CD8-positive, alpha-beta T cell (primary cell): ENCODE measurements at regions of chr2 and their contacts with region 1.

Region 1: GRCh38 chr2:55050133-55050994 is at the start of gene RTN4:
- DNase-seq: peak; percentile 95 to 99 (median 98)
- ATAC-seq: peak; percentile 88
- H3K4me3 ChIP-seq: peak within 1 kb of the TSS; percentile 79 to 87
- H3K4me3 Mint-ChIP-seq: peak within 1 kb of the TSS; percentile 100
- H3K27ac ChIP-seq: peak within 1 kb of the TSS; percentile 83 to 90
- H3K27ac Mint-ChIP-seq: peak within 1 kb of the TSS; percentile 100
- H3K4me1 ChIP-seq: peaks cover 60% of the 10 kb centered on the region
- H3K4me1 Mint-ChIP-seq: peaks cover 72% of the 10 kb centered on the region
- H3K27me3 ChIP-seq: no peaks in the 10 kb centered on the region
- H3K27me3 Mint-ChIP-seq: no peaks in the 10 kb centered on the region
- CTCF ChIP-seq: no peak
- total RNA-seq, gene RTN4: 79.7 to 81.7 TPM

Region 2: DNA sequence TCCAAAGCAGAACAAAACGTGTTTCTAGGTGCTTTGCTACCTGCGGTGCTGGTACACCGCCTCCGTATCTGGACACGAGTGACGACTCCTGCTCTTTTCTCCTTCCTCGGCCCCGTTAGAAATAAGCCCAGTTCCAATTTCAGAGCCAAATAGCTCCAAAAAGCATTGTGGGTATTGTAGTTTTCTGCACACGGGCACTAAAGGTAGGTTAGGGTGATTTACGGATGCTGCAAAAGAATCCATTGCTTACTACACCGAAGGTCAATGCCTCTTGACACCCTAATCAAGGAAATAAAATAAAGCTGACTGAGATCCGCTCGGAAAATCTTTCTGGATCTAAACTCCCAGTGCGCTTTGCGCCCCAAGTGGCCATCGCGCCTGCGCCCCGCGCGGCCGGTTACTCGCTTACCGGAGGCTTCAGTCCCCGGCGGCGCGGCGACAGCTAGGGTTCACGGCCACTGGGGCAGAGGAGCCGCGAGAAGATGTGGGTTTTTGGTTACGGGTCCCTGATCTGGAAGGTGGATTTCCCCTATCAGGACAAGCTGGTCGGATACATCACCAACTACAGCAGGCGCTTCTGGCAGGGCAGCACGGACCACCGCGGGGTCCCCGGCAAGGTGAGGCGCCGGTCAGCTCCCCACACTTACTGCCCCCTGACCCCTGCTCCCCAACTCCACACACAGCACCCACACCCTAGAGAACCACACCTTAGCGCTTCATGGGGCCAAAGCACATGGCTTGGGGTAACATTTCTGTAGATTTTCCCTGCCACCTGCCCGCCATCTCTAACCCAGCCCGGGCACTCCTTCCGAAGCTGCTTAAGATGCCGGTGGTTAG is 1282.7 kb before region 1 on chr2 and contains the start of gene CHAC2:
- CTCF ChIA-PET with region 1: no interaction called
- POLR2A ChIA-PET with region 1: no interaction called
- intact Hi-C with region 1: loop called in 1 of 2 experiments (anchors 10 kb)
- DNase-seq: peak; percentile 50 to 92 (median 84)
- ATAC-seq: peak; percentile 87
- H3K4me3 ChIP-seq: peak within 1 kb of the TSS; percentile 71 to 96
- H3K4me3 Mint-ChIP-seq: peak within 1 kb of the TSS; percentile 92
- H3K27ac ChIP-seq: peak within 1 kb of the TSS; percentile 70 to 86
- H3K27ac Mint-ChIP-seq: peak within 1 kb of the TSS; percentile 93
- H3K4me1 ChIP-seq: peaks cover 9% of the 10 kb centered on the region
- H3K4me1 Mint-ChIP-seq: peaks cover 29% of the 10 kb centered on the region
- H3K27me3 ChIP-seq: no peaks in the 10 kb centered on the region
- H3K27me3 Mint-ChIP-seq: no peaks in the 10 kb centered on the region
- CTCF ChIP-seq: peak; percentile 31
- total RNA-seq, gene CHAC2: 0.87 to 1.0 TPM

Region 3: GRCh38 chr2:54570925-54571694 is 479.3 kb before region 1 on chr2:
- CTCF ChIA-PET with region 1: no interaction called
- POLR2A ChIA-PET with region 1: no interaction called
- intact Hi-C with region 1: loop called (anchors 5 kb)
- DNase-seq: peak; percentile 23 to 87 (median 69)
- ATAC-seq: peak; percentile 8
- H3K4me3 ChIP-seq: peak overlapping the region; percentile 13 to 21
- H3K4me3 Mint-ChIP-seq: peak overlapping the region; percentile 81
- H3K27ac ChIP-seq: peak overlapping the region; percentile 87 to 94
- H3K27ac Mint-ChIP-seq: peak overlapping the region; percentile 100
- H3K4me1 ChIP-seq: peaks cover 94% of the 10 kb centered on the region
- H3K4me1 Mint-ChIP-seq: peaks cover 95% of the 10 kb centered on the region
- H3K27me3 ChIP-seq: no peaks in the 10 kb centered on the region
- H3K27me3 Mint-ChIP-seq: no peaks in the 10 kb centered on the region
- CTCF ChIP-seq: no peak

Region 4: GRCh38 chr2:55014962-55015939 is 35.1 kb before region 1 on chr2:
- CTCF ChIA-PET with region 1: interaction called, 18 read pairs
- POLR2A ChIA-PET with region 1: interaction called, 15 read pairs
- intact Hi-C with region 1: loop called (anchors 1 to 2 kb)
- DNase-seq: peak in 7 of 9 experiments; percentile 22 to 73 (median 41)
- ATAC-seq: peak; percentile 39
- H3K4me3 ChIP-seq: no peak overlapping the region
- H3K4me3 Mint-ChIP-seq: no peak overlapping the region
- H3K27ac ChIP-seq: no peak overlapping the region
- H3K27ac Mint-ChIP-seq: no peak overlapping the region
- H3K4me1 ChIP-seq: peaks cover 28% of the 10 kb centered on the region
- H3K4me1 Mint-ChIP-seq: peaks cover 54% of the 10 kb centered on the region
- H3K27me3 ChIP-seq: no peaks in the 10 kb centered on the region
- H3K27me3 Mint-ChIP-seq: no peaks in the 10 kb centered on the region
- CTCF ChIP-seq: peak; percentile 59

Region 5: GRCh38 chr2:55080204-55080738 is 29.9 kb after region 1 on chr2:
- CTCF ChIA-PET with region 1: no interaction called
- POLR2A ChIA-PET with region 1: no interaction called
- intact Hi-C with region 1: no loop called
- DNase-seq: no peak
- ATAC-seq: no peak
- H3K4me3 ChIP-seq: no peak overlapping the region
- H3K4me3 Mint-ChIP-seq: no peak overlapping the region
- H3K27ac ChIP-seq: no peak overlapping the region
- H3K27ac Mint-ChIP-seq: no peak overlapping the region
- H3K4me1 ChIP-seq: no peaks in the 10 kb centered on the region
- H3K4me1 Mint-ChIP-seq: no peaks in the 10 kb centered on the region
- H3K27me3 ChIP-seq: no peaks in the 10 kb centered on the region
- H3K27me3 Mint-ChIP-seq: peaks cover 3% of the 10 kb centered on the region
- CTCF ChIP-seq: no peak

Region 6: GRCh38 chr2:55133467-55134315 is 83.3 kb after region 1 on chr2:
- CTCF ChIA-PET with region 1: no interaction called
- POLR2A ChIA-PET with region 1: interaction called, 8 read pairs
- intact Hi-C with region 1: loop called (anchors 1 to 5 kb)
- DNase-seq: peak; percentile 4 to 92 (median 35)
- ATAC-seq: peak; percentile 92
- H3K4me3 ChIP-seq: peak overlapping the region; percentile 49 to 51
- H3K4me3 Mint-ChIP-seq: peak overlapping the region; percentile 89
- H3K27ac ChIP-seq: peak overlapping the region; percentile 60 to 93
- H3K27ac Mint-ChIP-seq: peak overlapping the region; percentile 97
- H3K4me1 ChIP-seq: peaks cover 27% of the 10 kb centered on the region
- H3K4me1 Mint-ChIP-seq: peaks cover 43% of the 10 kb centered on the region
- H3K27me3 ChIP-seq: no peaks in the 10 kb centered on the region
- H3K27me3 Mint-ChIP-seq: no peaks in the 10 kb centered on the region
- CTCF ChIP-seq: no peak

Region 7: GRCh38 chr2:55232084-55232862 is 181.9 kb after region 1 on chr2 and contains the starts of genes CLHC1 and RPS27A:
- CTCF ChIA-PET with region 1: no interaction called
- POLR2A ChIA-PET with region 1: interaction called, 9 read pairs
- intact Hi-C with region 1: loop called (anchors 1 to 5 kb)
- DNase-seq: peak; percentile 89 to 97 (median 94)
- ATAC-seq: peak; percentile 87
- H3K4me3 ChIP-seq: peak within 1 kb of the TSS; percentile 97 to 99
- H3K4me3 Mint-ChIP-seq: peak within 1 kb of the TSS; percentile 93
- H3K27ac ChIP-seq: peak within 1 kb of the TSS; percentile 92 to 99
- H3K27ac Mint-ChIP-seq: peak within 1 kb of the TSS; percentile 97
- H3K4me1 ChIP-seq: peaks cover 35% of the 10 kb centered on the region
- H3K4me1 Mint-ChIP-seq: peaks cover 68% of the 10 kb centered on the region
- H3K27me3 ChIP-seq: no peaks in the 10 kb centered on the region
- H3K27me3 Mint-ChIP-seq: no peaks in the 10 kb centered on the region
- CTCF ChIP-seq: no peak
- total RNA-seq, gene CLHC1: 2.2 to 2.3 TPM
- total RNA-seq, gene RPS27A: 2,135 to 2,231 TPM

Region 8: GRCh38 chr2:55519938-55520885 is 469.8 kb after region 1 on chr2:
- CTCF ChIA-PET with region 1: no interaction called
- POLR2A ChIA-PET with region 1: interaction called, 3 read pairs
- intact Hi-C with region 1: loop called (anchors 5 to 10 kb)
- DNase-seq: peak in 8 of 9 experiments; percentile 14 to 67 (median 44)
- ATAC-seq: peak; percentile 27
- H3K4me3 ChIP-seq: peak overlapping the region; percentile 85 to 87
- H3K4me3 Mint-ChIP-seq: peak overlapping the region; percentile 97
- H3K27ac ChIP-seq: peak overlapping the region; percentile 85 to 95
- H3K27ac Mint-ChIP-seq: peak overlapping the region; percentile 100
- H3K4me1 ChIP-seq: peaks cover 8% of the 10 kb centered on the region
- H3K4me1 Mint-ChIP-seq: peaks cover 20% of the 10 kb centered on the region
- H3K27me3 ChIP-seq: no peaks in the 10 kb centered on the region
- H3K27me3 Mint-ChIP-seq: no peaks in the 10 kb centered on the region
- CTCF ChIP-seq: no peak